ENCODE measurements at regions of chr6 and their contacts with region 1.

Region 1: DNA sequence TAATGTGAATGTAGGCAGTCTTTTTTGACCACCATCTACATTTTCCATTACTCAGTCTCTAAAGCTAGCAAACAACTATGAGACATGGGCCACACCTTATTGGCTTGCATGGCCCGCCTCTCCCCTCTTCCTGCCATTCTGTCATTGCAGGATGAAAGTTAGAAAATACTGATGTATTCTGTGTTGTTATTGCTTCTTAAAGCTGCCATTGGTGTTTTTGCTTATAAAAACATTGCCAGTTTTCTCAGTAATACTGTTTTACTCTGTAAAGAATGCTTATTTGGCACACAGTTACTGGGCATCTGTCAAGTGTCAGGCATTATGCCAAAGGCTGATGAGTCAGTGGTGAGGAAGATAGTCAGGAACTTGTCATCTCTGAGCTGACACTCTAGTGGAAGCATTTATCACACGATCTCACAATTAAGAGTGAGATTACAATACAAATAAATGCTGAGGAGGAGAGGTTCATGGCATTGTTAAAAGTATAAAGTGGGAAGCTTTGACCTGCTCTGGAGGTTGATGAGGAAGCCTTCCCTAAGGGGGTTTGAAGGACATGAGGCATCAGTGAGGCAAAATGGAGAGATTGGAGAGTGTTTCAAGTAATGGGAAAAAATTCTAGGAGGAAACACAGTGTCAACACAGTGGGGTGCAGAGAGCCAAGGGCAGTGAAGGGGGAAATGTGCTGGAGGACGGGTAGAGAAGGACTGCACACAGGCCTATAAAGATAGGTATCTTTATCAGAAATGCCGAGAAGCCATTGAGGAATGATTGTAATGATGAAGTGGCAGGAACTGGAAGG is 14.7 kb downstream of the KLHL32 start:
- DNase-seq: peak; percentile 56 to 87
- H3K4me3 ChIP-seq: no peak overlapping the region
- H3K27ac ChIP-seq: peak overlapping the region; percentile 31
- H3K4me1 ChIP-seq: peaks cover 30% of the 10 kb centered on the region
- H3K27me3 ChIP-seq: no peaks in the 10 kb centered on the region
- CTCF ChIP-seq: no peak

Region 2: GRCh38 chr6:96743496-96743895 is 195.7 kb before region 1 on chr6:
- CTCF ChIA-PET with region 1: no interaction called
- POLR2A ChIA-PET with region 1: no interaction called
- intact Hi-C with region 1: no loop called
- DNase-seq: no peak
- H3K4me3 ChIP-seq: no peak overlapping the region
- H3K27ac ChIP-seq: no peak overlapping the region
- H3K4me1 ChIP-seq: no peaks in the 10 kb centered on the region
- H3K27me3 ChIP-seq: no peaks in the 10 kb centered on the region
- CTCF ChIP-seq: no peak

Region 3: GRCh38 chr6:96923871-96924493 is 15.2 kb before region 1 on chr6:
- CTCF ChIA-PET with region 1: no interaction called
- POLR2A ChIA-PET with region 1: no interaction called
- intact Hi-C with region 1: loop called (anchors 1 kb)
- DNase-seq: no peak
- H3K4me3 ChIP-seq: peak overlapping the region; percentile 85
- H3K27ac ChIP-seq: peak overlapping the region; percentile 67
- H3K4me1 ChIP-seq: peaks cover 16% of the 10 kb centered on the region
- H3K27me3 ChIP-seq: no peaks in the 10 kb centered on the region
- CTCF ChIP-seq: no peak

Region 4: GRCh38 chr6:97000138-97000537 is 60.9 kb after region 1 on chr6:
- CTCF ChIA-PET with region 1: no interaction called
- POLR2A ChIA-PET with region 1: no interaction called
- intact Hi-C with region 1: no loop called
- DNase-seq: no peak
- H3K4me3 ChIP-seq: no peak overlapping the region
- H3K27ac ChIP-seq: no peak overlapping the region
- H3K4me1 ChIP-seq: no peaks in the 10 kb centered on the region
- H3K27me3 ChIP-seq: no peaks in the 10 kb centered on the region
- CTCF ChIP-seq: no peak